ENCODE measurements at regions of chr1 and their contacts with region 1.

Region 1: GRCh38 chr1:150876119-150876454 is 312 bp downstream of the ARNT start:
- DNase-seq: no peak
- H3K4me3 Mint-ChIP-seq: peak overlapping the region; percentile 95
- H3K27ac Mint-ChIP-seq: peak overlapping the region; percentile 91
- H3K4me1 Mint-ChIP-seq: peaks cover 34% of the 10 kb centered on the region
- H3K27me3 Mint-ChIP-seq: no peaks in the 10 kb centered on the region

Region 2: GRCh38 chr1:150813058-150813707 is 62.9 kb before region 1 on chr1:
- CTCF ChIA-PET with region 1: no interaction called
- POLR2A ChIA-PET with region 1: no interaction called
- DNase-seq: peak; percentile 18
- H3K4me3 Mint-ChIP-seq: no peak overlapping the region
- H3K27ac Mint-ChIP-seq: no peak overlapping the region
- H3K4me1 Mint-ChIP-seq: peaks cover 1% of the 10 kb centered on the region
- H3K27me3 Mint-ChIP-seq: no peaks in the 10 kb centered on the region

Region 3: DNA sequence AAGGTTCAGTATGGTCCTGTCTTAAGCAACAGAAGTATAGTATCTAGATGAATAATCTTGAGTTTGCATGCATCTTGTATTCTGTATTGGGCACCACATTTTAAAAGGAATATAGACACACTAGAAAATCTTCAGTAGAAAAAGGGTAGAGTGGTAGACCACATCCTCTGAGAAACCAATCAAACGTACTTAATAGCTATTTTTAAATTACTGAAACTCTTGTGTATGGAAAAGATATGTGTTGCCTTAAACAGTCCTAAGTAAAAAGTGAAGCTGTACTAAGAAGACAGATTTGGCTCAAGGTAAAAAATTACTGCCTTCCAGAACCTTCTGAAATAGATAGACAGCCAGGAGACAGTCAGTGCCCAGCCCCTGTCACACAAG is 13.9 kb after region 1 on chr1:
- CTCF ChIA-PET with region 1: interaction called, 5 read pairs
- POLR2A ChIA-PET with region 1: interaction called, 21 read pairs
- DNase-seq: no peak
- H3K4me3 Mint-ChIP-seq: peak overlapping the region; percentile 22
- H3K27ac Mint-ChIP-seq: peak overlapping the region; percentile 81
- H3K4me1 Mint-ChIP-seq: peaks cover 35% of the 10 kb centered on the region
- H3K27me3 Mint-ChIP-seq: peaks cover 6% of the 10 kb centered on the region

Measured in activated CD4-positive, alpha-beta memory T cell treated with anti-CD3 and anti-CD28 coated beads, Interleukin-2, amount 10 ng/mL, durations not matched to agents 7 days and 5 days (primary cell).